Activated B cell treated with CpG ODN at 0.5 μM for 24 hours (primary cell): ENCODE measurements at regions of chr3 and their contacts with region 1.

Region 1: GRCh38 chr3:177197041-177197727 is at the start of gene TBL1XR1:
- DNase-seq: peak; percentile 80
- ATAC-seq: peak; percentile 58
- H3K4me3 Mint-ChIP-seq: peak within 1 kb of the TSS; percentile 97
- H3K27ac Mint-ChIP-seq: peak within 1 kb of the TSS; percentile 97
- H3K4me1 Mint-ChIP-seq: peaks cover 59% of the 10 kb centered on the region
- H3K27me3 Mint-ChIP-seq: no peaks in the 10 kb centered on the region
- CTCF ChIP-seq: no peak
- total RNA-seq, gene TBL1XR1: 312 and 372 TPM in 2 replicates

Region 2: DNA sequence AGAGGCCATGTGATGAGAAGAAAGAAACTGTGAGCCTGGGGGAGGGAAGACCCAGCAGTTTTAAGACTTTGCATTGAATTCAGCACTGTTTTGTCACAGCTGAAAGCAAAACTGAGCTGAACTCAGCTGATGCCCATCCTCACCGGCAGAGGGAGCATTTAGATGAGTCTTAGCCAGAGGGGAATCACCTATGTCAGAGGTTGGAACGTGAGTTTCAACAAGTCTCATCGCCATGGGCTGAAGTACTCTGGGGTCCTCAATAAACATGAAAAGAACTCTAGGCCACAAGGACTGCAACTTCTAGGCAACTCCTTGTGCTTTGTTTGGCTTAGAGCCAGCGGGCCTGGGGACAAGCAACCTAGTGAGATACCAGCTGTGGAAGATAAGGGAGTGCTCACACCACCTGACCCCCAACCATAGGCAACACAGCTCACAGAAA is 324.4 kb before region 1 on chr3:
- CTCF ChIA-PET with region 1: no interaction called
- POLR2A ChIA-PET with region 1: no interaction called
- intact Hi-C with region 1: loop called (anchors 2 kb)
- DNase-seq: peak; percentile 27
- ATAC-seq: peak; percentile 82
- H3K4me3 Mint-ChIP-seq: no peak overlapping the region
- H3K27ac Mint-ChIP-seq: no peak overlapping the region
- H3K4me1 Mint-ChIP-seq: peaks cover 2% of the 10 kb centered on the region
- H3K27me3 Mint-ChIP-seq: peaks cover 5% of the 10 kb centered on the region
- CTCF ChIP-seq: no peak

Region 3: DNA sequence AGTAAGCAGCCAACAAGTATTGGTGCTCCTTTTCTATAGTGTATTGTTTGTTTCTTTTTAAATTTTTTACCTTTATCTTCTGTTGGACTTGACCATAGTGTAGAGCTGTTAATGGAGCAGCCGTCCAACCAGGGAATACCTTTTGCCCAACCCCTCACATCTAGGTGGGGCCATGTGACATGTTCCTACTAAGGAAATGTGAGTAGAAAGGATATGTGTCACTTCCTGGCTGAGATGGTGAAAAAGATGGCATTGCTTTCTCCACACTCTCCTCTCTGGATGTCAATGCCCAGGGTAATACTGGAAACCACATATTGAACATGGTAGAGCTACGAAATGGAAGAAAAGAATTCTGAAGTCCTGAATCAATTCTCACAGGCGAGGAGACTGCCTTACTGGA is 218.7 kb before region 1 on chr3:
- CTCF ChIA-PET with region 1: no interaction called
- POLR2A ChIA-PET with region 1: no interaction called
- intact Hi-C with region 1: no loop called
- DNase-seq: no peak
- ATAC-seq: no peak
- H3K4me3 Mint-ChIP-seq: no peak overlapping the region
- H3K27ac Mint-ChIP-seq: no peak overlapping the region
- H3K4me1 Mint-ChIP-seq: no peaks in the 10 kb centered on the region
- H3K27me3 Mint-ChIP-seq: no peaks in the 10 kb centered on the region
- CTCF ChIP-seq: no peak

Region 4: DNA sequence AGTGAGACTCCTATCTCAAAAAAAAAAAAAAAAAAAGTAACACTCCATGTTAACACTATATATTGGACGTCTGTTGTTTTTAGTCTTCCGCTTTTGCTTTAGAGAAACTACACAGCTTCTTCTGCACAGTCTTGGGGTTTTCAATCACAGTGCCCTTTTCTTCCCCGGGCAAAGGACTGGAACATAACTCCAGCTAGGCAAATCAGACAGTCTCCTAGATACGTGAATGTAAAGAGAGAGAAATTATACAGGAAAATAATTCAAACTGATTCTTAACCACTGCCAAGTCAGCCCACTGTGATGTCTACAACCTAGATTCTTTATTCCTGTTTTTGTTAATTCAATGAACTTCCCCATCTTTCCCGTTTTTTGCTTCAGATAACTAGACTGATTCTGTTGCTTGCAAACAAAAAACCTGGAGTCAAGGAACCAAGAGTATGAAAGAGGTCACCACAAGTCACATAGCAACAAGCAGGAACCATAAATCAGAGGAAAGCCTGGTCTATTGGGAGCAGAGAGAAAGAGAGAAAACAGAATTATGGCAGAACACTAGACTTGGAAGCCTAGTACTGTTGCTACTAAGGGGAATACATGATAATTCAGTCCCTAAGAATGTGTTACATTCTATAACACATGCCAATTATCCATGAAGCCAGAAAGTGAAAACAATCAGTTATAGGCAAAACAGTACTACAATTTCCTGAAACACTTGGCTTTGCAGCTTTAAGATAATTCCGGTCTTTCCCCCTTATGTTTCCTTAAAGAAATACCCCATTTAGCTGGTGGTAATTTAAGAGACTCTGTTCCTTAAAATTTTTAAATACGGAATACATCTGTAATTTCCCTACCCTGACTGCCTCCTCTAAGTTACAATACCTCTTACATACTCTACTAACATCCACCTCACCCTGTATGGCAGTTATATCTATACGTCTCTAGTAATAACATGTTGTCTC is 63.0 kb before region 1 on chr3:
- CTCF ChIA-PET with region 1: no interaction called
- POLR2A ChIA-PET with region 1: no interaction called
- intact Hi-C with region 1: no loop called
- DNase-seq: no peak
- ATAC-seq: no peak
- H3K4me3 Mint-ChIP-seq: no peak overlapping the region
- H3K27ac Mint-ChIP-seq: peak overlapping the region; percentile 38
- H3K4me1 Mint-ChIP-seq: peaks cover 74% of the 10 kb centered on the region
- H3K27me3 Mint-ChIP-seq: no peaks in the 10 kb centered on the region
- CTCF ChIP-seq: no peak

Region 5: GRCh38 chr3:177144923-177145780 is 52.0 kb before region 1 on chr3:
- CTCF ChIA-PET with region 1: interaction called, 4 read pairs
- POLR2A ChIA-PET with region 1: interaction called, 13 read pairs
- intact Hi-C with region 1: loop called (anchors 1 kb)
- DNase-seq: no peak
- ATAC-seq: peak; percentile 68
- H3K4me3 Mint-ChIP-seq: peak overlapping the region; percentile 54
- H3K27ac Mint-ChIP-seq: peak overlapping the region; percentile 83
- H3K4me1 Mint-ChIP-seq: peaks cover 90% of the 10 kb centered on the region
- H3K27me3 Mint-ChIP-seq: no peaks in the 10 kb centered on the region
- CTCF ChIP-seq: no peak

Region 6: DNA sequence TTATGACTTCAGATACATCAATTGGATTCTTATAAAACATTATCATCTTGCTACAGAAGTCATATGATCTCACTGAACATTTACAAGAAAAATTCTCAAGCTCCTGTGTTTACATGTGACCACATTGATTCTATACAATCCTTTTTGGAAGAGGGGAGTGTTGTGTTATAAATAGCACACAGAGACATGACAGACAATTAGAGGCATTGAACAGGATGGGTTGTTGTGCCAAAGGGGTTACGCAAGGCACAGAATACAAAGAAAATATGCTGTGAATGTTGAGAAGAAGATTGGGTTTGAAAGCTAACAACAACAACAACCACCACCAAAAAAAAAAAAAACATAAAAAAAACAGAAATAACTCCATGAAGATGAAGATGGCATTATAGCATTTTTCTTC is 32.6 kb after region 1 on chr3:
- CTCF ChIA-PET with region 1: interaction called, 3 read pairs
- POLR2A ChIA-PET with region 1: no interaction called
- intact Hi-C with region 1: loop called (anchors 2 kb)
- DNase-seq: no peak
- ATAC-seq: no peak
- H3K4me3 Mint-ChIP-seq: no peak overlapping the region
- H3K27ac Mint-ChIP-seq: no peak overlapping the region
- H3K4me1 Mint-ChIP-seq: peaks cover 8% of the 10 kb centered on the region
- H3K27me3 Mint-ChIP-seq: no peaks in the 10 kb centered on the region
- CTCF ChIP-seq: no peak

Region 7: DNA sequence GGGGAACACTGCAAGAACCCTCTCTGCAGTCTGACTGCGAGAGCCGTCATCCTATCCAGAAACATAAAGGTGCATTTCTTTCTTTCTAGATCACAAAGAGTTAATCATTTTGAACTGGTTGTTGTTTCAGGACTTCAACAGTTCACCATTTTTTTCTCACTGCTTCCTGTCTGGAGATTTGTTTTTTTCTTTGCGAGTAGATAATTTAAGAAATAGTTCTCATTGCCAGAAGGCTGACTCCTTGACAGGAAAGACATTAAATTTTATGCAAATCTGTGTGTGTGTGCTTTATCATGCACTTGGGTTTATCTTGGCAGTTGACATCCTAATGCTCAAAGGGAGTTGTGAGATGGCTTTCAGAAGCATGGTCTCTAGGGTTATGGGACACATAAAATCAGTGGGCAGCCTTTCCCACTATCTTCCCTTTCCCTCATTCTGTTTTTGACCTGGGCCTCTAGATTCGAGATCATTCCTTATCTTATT is 123.6 kb after region 1 on chr3:
- CTCF ChIA-PET with region 1: no interaction called
- POLR2A ChIA-PET with region 1: interaction called, 19 read pairs
- intact Hi-C with region 1: loop called (anchors 1 kb)
- DNase-seq: no peak
- ATAC-seq: peak; percentile 22
- H3K4me3 Mint-ChIP-seq: peak overlapping the region; percentile 57
- H3K27ac Mint-ChIP-seq: peak overlapping the region; percentile 77
- H3K4me1 Mint-ChIP-seq: peaks cover 87% of the 10 kb centered on the region
- H3K27me3 Mint-ChIP-seq: no peaks in the 10 kb centered on the region
- CTCF ChIP-seq: no peak

Region 8: GRCh38 chr3:177378168-177378567 is 181.0 kb after region 1 on chr3:
- CTCF ChIA-PET with region 1: no interaction called
- POLR2A ChIA-PET with region 1: interaction called, 11 read pairs
- intact Hi-C with region 1: no loop called
- DNase-seq: no peak
- ATAC-seq: peak; percentile 63
- H3K4me3 Mint-ChIP-seq: peak overlapping the region; percentile 46
- H3K27ac Mint-ChIP-seq: peak overlapping the region; percentile 69
- H3K4me1 Mint-ChIP-seq: peaks cover 55% of the 10 kb centered on the region
- H3K27me3 Mint-ChIP-seq: no peaks in the 10 kb centered on the region
- CTCF ChIP-seq: no peak

Region 9: GRCh38 chr3:177569875-177570657 is 372.9 kb after region 1 on chr3:
- CTCF ChIA-PET with region 1: no interaction called
- POLR2A ChIA-PET with region 1: no interaction called
- intact Hi-C with region 1: no loop called
- DNase-seq: no peak
- ATAC-seq: no peak
- H3K4me3 Mint-ChIP-seq: no peak overlapping the region
- H3K27ac Mint-ChIP-seq: no peak overlapping the region
- H3K4me1 Mint-ChIP-seq: peaks cover 17% of the 10 kb centered on the region
- H3K27me3 Mint-ChIP-seq: no peaks in the 10 kb centered on the region
- CTCF ChIP-seq: no peak

Region 10: GRCh38 chr3:178385280-178385952 is 1188.2 kb after region 1 on chr3:
- CTCF ChIA-PET with region 1: no interaction called
- POLR2A ChIA-PET with region 1: no interaction called
- intact Hi-C with region 1: loop called (anchors 10 kb)
- DNase-seq: no peak
- ATAC-seq: peak; percentile 28
- H3K4me3 Mint-ChIP-seq: no peak overlapping the region
- H3K27ac Mint-ChIP-seq: no peak overlapping the region
- H3K4me1 Mint-ChIP-seq: no peaks in the 10 kb centered on the region
- H3K27me3 Mint-ChIP-seq: no peaks in the 10 kb centered on the region
- CTCF ChIP-seq: peak; percentile 49